ENCODE measurements at regions of chr1 and their contacts with region 1.

Region 1: DNA sequence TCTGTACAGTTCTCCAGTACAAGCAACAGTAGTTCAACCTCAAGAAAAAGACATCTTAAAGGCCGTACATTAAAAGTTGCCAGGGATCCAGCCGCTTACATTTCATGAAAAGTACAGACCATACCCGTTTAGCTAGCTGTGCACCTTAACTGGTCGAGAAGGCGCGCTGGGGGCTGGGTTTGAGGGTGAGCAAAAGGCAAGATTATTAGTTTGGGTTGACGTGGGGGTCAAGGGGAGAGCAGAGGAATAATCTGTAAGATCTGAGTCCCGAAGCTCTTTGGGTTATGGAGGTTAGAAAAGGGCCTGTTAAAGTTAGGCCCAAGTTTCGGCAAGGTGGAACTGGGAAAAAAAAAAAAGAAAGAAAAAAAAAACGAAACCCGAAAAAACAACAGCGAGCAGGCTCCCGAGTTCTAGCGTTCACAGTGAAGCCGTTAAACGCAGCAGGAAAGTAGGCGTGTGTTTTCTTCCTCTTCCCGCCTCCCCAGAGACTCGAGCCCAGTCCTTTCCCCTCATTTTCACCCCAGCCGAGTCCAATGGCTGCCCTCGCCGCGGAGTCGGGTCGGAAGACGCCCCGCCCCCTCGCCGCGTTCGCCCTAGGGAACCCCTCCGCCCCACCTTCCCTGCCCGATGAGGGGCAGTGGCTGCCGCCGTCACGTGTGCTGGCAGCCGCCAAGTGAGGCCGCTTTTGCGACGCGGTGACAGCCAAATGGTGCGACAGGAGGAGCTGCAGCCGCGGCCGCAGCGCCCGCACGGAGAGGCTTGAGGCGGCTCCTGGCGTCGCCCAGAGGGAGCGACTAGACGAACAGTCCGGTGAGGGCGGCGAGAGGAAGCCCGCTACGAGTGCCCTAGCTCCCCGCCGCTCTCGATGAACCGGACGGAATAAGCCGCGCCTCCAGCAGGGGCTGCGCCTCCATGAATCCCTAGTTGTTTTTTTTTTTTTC is at the start of gene PKN2:
- DNase-seq: peak; percentile 94
- ATAC-seq: peak; percentile 91
- H3K4me3 Mint-ChIP-seq: peak within 1 kb of the TSS; percentile 95
- H3K27ac Mint-ChIP-seq: peak within 1 kb of the TSS; percentile 97
- H3K4me1 Mint-ChIP-seq: peaks cover 28% of the 10 kb centered on the region
- H3K27me3 Mint-ChIP-seq: no peaks in the 10 kb centered on the region
- CTCF ChIP-seq: no peak
- total RNA-seq, gene PKN2: 29.4 and 42.7 TPM in 2 replicates

Region 2: GRCh38 chr1:86866665-86867064 is 1817.1 kb before region 1 on chr1:
- CTCF ChIA-PET with region 1: no interaction called
- POLR2A ChIA-PET with region 1: interaction called, 14 read pairs
- intact Hi-C with region 1: no loop called
- DNase-seq: no peak
- ATAC-seq: peak; percentile 5
- H3K4me3 Mint-ChIP-seq: peak overlapping the region; percentile 65
- H3K27ac Mint-ChIP-seq: peak overlapping the region; percentile 87
- H3K4me1 Mint-ChIP-seq: peaks cover 44% of the 10 kb centered on the region
- H3K27me3 Mint-ChIP-seq: no peaks in the 10 kb centered on the region
- CTCF ChIP-seq: no peak

Region 3: GRCh38 chr1:88180449-88181108 is 503.2 kb before region 1 on chr1:
- CTCF ChIA-PET with region 1: no interaction called
- POLR2A ChIA-PET with region 1: interaction called, 3 read pairs
- intact Hi-C with region 1: loop called (anchors 5 kb)
- DNase-seq: peak; percentile 25
- ATAC-seq: peak; percentile 97
- H3K4me3 Mint-ChIP-seq: no peak overlapping the region
- H3K27ac Mint-ChIP-seq: no peak overlapping the region
- H3K4me1 Mint-ChIP-seq: peaks cover 3% of the 10 kb centered on the region
- H3K27me3 Mint-ChIP-seq: peaks cover 3% of the 10 kb centered on the region
- CTCF ChIP-seq: peak; percentile 56

Region 4: GRCh38 chr1:88701275-88701674 is 17.5 kb after region 1 on chr1:
- CTCF ChIA-PET with region 1: no interaction called
- POLR2A ChIA-PET with region 1: interaction called, 18 read pairs
- intact Hi-C with region 1: loop called (anchors 1 kb)
- DNase-seq: no peak
- ATAC-seq: peak; percentile 95
- H3K4me3 Mint-ChIP-seq: no peak overlapping the region
- H3K27ac Mint-ChIP-seq: peak overlapping the region; percentile 59
- H3K4me1 Mint-ChIP-seq: peaks cover 51% of the 10 kb centered on the region
- H3K27me3 Mint-ChIP-seq: no peaks in the 10 kb centered on the region
- CTCF ChIP-seq: no peak

Region 5: DNA sequence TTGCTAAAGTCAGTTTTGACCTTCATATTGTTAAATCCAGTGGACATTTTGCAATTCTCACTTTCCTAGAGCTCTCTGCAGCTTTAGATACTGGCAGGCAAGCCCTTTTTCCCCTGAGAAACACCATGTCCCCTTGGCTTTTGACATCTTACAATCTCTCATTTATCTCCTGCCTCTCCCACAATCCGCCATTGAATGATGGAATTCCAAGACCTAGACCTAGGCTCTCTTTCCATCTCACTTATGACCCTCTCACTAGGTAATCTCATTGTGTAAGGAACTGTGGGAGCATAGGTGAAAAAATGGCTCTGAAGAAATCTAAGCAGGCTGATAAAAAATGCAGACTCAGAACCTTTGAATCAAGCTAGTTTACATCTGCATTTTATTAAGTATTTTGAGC is 306.6 kb after region 1 on chr1:
- CTCF ChIA-PET with region 1: no interaction called
- POLR2A ChIA-PET with region 1: no interaction called
- intact Hi-C with region 1: loop called (anchors 1 kb)
- DNase-seq: no peak
- ATAC-seq: no peak
- H3K4me3 Mint-ChIP-seq: no peak overlapping the region
- H3K27ac Mint-ChIP-seq: no peak overlapping the region
- H3K4me1 Mint-ChIP-seq: peaks cover 39% of the 10 kb centered on the region
- H3K27me3 Mint-ChIP-seq: no peaks in the 10 kb centered on the region
- CTCF ChIP-seq: no peak

Region 6: DNA sequence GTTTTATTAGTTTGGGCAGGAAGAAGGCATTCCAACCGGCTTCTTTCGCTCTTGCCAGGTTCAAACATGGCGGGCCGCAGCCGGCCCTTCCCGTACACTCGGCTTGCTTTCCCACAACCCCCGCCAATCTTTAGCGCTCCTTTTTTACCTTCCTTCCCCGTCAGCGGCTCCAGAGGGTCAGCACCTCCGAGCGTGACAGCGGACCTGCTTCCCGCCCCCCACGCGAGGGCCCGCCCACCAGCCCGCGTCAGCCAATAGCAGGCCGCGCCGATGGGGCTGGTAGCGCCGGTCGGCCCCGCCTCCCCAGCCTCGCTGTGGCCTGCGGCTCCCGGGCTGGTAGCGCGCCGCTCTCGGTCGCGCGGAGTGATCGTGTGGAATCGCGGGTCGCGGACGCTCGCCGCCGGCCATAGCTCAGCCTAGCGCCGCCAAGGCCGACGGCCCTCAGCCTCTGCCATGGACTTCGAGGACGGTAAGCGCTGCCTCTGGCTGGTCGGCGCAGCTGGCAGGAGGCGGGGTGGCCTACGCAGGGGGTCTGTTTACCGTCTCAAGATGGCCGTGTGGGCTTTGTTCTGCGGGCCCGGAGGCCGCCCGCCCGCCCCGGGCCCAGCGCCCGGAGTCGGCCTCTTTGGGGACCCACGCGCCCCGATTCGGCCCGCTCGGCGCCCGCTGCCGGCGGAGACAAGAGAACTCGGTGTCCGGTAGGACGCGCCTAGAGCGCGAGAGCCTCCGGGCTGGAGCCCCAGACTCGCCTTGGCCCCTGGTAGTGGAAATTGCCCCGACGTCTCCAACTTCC is 1311.2 kb after region 1 on chr1 and contains the start of gene ZNF326:
- CTCF ChIA-PET with region 1: no interaction called
- POLR2A ChIA-PET with region 1: no interaction called
- intact Hi-C with region 1: loop called (anchors 10 kb)
- DNase-seq: peak; percentile 98
- ATAC-seq: peak; percentile 97
- H3K4me3 Mint-ChIP-seq: peak within 1 kb of the TSS; percentile 94
- H3K27ac Mint-ChIP-seq: peak within 1 kb of the TSS; percentile 88
- H3K4me1 Mint-ChIP-seq: peaks cover 32% of the 10 kb centered on the region
- H3K27me3 Mint-ChIP-seq: no peaks in the 10 kb centered on the region
- CTCF ChIP-seq: no peak
- total RNA-seq, gene ZNF326: 26.2 and 30.3 TPM in 2 replicates